ENCODE measurements at regions of chr2 and their contacts with region 1.

Region 1: DNA sequence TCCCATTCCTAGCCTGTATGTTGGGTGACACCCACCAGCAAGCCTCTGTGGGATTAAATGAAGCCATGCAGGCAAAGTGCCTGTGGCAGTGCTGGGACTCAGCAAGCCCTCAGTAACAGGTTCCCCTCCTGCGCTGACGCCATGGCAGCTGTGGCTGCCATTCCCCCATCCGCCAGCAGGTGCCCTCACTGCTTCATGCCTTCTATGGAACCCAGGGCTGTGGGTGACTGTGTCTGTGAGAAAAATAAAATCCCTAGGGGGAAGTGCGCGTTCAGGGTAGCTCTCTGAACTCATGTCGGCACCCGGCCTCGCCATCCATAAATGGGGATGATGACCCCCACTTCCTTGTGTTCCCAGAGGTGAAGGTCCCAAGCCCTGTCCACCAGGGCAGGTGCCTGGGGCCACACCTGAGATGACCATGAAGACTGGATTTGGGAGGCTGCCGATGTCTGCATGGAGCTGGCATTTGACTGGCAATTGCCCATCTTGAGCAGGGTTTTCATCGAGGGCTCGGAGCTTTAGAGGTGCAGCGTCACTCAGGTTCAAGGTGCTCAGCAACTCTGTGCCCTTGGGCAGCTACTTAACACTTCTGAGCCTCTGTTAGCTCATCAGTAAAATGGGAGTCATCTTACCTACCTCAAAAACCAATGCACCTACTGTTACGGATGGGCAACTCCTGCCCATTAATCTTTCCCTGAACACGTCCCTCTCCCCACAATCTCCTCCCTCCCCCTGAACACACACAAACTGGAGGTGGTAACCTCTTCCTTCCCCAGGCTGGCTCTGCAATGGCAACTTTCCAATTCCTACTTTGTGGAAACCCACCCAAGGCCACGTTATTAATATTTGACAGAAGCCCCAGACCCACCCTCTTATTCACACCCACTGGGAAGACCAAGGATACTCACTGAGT is 2.9 kb upstream of the MAL start:
- DNase-seq: peak; percentile 69 to 90 (median 83)
- ATAC-seq: peak; percentile 78
- H3K4me3 ChIP-seq: peak overlapping the region; percentile 39
- H3K4me3 Mint-ChIP-seq: peak overlapping the region; percentile 77 to 100 (median 86)
- H3K27ac ChIP-seq: peak overlapping the region; percentile 49
- H3K27ac Mint-ChIP-seq: peak overlapping the region; percentile 81 to 100 (median 95)
- H3K4me1 ChIP-seq: peaks cover 9 to 26% of the 10 kb centered on the region in 2 donors
- H3K4me1 Mint-ChIP-seq: peaks cover 23 to 66% (median 60%) of the 10 kb centered on the region in 7 donors
- H3K27me3 ChIP-seq: no peaks in the 10 kb centered on the region
- H3K27me3 Mint-ChIP-seq: peaks cover 0 to 14% (median 0%) of the 10 kb centered on the region in 5 donors

Region 2: DNA sequence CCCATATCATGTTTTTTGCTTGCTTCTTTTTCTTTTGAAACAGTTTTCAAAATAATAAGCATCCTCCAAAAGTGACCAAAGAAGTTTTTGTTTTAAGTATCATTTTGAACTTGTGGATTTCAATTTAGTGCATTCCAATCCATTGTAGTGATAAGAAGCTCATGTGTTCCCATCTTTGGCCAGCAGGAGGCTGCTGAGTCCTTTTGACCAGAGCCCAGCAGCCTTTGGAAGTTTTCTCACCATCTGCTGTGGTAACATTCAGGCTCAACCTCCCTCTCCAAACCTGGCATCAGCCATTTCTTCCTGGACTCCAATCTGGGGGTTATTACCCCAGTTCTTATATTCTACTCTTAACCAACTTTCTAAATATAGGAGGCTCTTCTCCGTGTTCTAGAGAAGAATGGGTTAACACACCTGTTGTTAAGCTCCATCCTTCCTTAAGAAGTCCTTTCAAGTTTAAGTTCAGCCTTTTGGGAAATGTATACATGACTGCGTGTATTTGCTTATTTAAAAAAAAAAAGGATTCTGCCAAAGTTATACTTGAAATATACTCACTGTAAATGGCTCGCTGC is 36.1 kb before region 1 on chr2:
- CTCF ChIA-PET with region 1: interaction called, 3 read pairs
- POLR2A ChIA-PET with region 1: no interaction called
- intact Hi-C with region 1: loop called in 1 of 2 experiments (anchors 1 kb)
- DNase-seq: peak in 6 of 9 donors; percentile 20 to 50 (median 28)
- ATAC-seq: no peak
- H3K4me3 ChIP-seq: no peak overlapping the region
- H3K4me3 Mint-ChIP-seq: no peak overlapping the region
- H3K27ac ChIP-seq: no peak overlapping the region
- H3K27ac Mint-ChIP-seq: no peak overlapping the region
- H3K4me1 ChIP-seq: no peaks in the 10 kb centered on the region
- H3K4me1 Mint-ChIP-seq: peaks cover 0 to 6% (median 0%) of the 10 kb centered on the region in 7 donors
- H3K27me3 ChIP-seq: no peaks in the 10 kb centered on the region
- H3K27me3 Mint-ChIP-seq: peaks cover 11 to 26% (median 20%) of the 10 kb centered on the region in 5 donors

Region 3: DNA sequence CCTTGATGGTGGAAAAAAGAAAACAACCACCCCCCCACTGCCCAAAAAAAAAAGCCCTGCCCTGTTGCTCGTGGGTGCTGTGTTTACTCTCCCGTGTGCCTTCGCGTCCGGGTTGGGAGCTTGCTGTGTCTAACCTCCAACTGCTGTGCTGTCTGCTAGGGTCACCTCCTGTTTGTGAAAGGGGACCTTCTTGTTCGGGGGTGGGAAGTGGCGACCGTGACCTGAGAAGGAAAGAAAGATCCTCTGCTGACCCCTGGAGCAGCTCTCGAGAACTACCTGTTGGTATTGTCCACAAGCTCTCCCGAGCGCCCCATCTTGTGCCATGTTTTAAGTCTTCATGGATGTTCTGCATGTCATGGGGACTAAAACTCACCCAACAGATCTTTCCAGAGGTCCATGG is 31.0 kb after region 1 on chr2:
- CTCF ChIA-PET with region 1: interaction called, 65 read pairs
- POLR2A ChIA-PET with region 1: interaction called, 380 read pairs
- intact Hi-C with region 1: loop called (anchors 1 to 2 kb)
- DNase-seq: peak in 1 of 9 donors; percentile 42
- ATAC-seq: no peak
- H3K4me3 ChIP-seq: no peak overlapping the region
- H3K4me3 Mint-ChIP-seq: peak overlapping the region; percentile 2 to 78 (median 49)
- H3K27ac ChIP-seq: peak overlapping the region; percentile 62
- H3K27ac Mint-ChIP-seq: peak overlapping the region; percentile 76 to 98 (median 90)
- H3K4me1 ChIP-seq: peaks cover 0 to 70% of the 10 kb centered on the region in 2 donors
- H3K4me1 Mint-ChIP-seq: peaks cover 29 to 94% (median 87%) of the 10 kb centered on the region in 7 donors
- H3K27me3 ChIP-seq: no peaks in the 10 kb centered on the region
- H3K27me3 Mint-ChIP-seq: no peaks in the 10 kb centered on the region

Region 4: GRCh38 chr2:95076784-95077529 is 54.4 kb after region 1 on chr2:
- CTCF ChIA-PET with region 1: interaction called, 502 read pairs
- POLR2A ChIA-PET with region 1: interaction called, 1,031 read pairs
- intact Hi-C with region 1: loop called (anchors 1 kb)
- DNase-seq: peak; percentile 77 to 92 (median 89)
- ATAC-seq: peak; percentile 87
- H3K4me3 ChIP-seq: peak overlapping the region; percentile 90
- H3K4me3 Mint-ChIP-seq: peak overlapping the region; percentile 85 to 97 (median 93)
- H3K27ac ChIP-seq: peak overlapping the region; percentile 80
- H3K27ac Mint-ChIP-seq: peak overlapping the region; percentile 96 to 99 (median 98)
- H3K4me1 ChIP-seq: peaks cover 22 to 73% of the 10 kb centered on the region in 2 donors
- H3K4me1 Mint-ChIP-seq: peaks cover 28 to 83% (median 77%) of the 10 kb centered on the region in 7 donors
- H3K27me3 ChIP-seq: no peaks in the 10 kb centered on the region
- H3K27me3 Mint-ChIP-seq: no peaks in the 10 kb centered on the region

Region 5: GRCh38 chr2:95165129-95166064 is 142.8 kb after region 1 on chr2 and contains the start of gene ZNF2:
- CTCF ChIA-PET with region 1: interaction called, 12 read pairs
- POLR2A ChIA-PET with region 1: interaction called, 27 read pairs
- intact Hi-C with region 1: loop called (anchors 1 kb)
- DNase-seq: peak; percentile 92 to 98 (median 96)
- ATAC-seq: peak; percentile 97
- H3K4me3 ChIP-seq: peak within 1 kb of the TSS; percentile 91
- H3K4me3 Mint-ChIP-seq: peak within 1 kb of the TSS; percentile 97 to 100 (median 99)
- H3K27ac ChIP-seq: peak within 1 kb of the TSS; percentile 82
- H3K27ac Mint-ChIP-seq: peak within 1 kb of the TSS; percentile 91 to 99 (median 96)
- H3K4me1 ChIP-seq: peaks cover 4 to 13% of the 10 kb centered on the region in 2 donors
- H3K4me1 Mint-ChIP-seq: peaks cover 23 to 54% (median 42%) of the 10 kb centered on the region in 7 donors
- H3K27me3 ChIP-seq: no peaks in the 10 kb centered on the region
- H3K27me3 Mint-ChIP-seq: no peaks in the 10 kb centered on the region
- total RNA-seq, gene ZNF2: 1.5 to 10.2 (median 3.4) TPM

Region 6: GRCh38 chr2:95402370-95403203 is 380.0 kb after region 1 on chr2 and contains the start of gene FAHD2A:
- CTCF ChIA-PET with region 1: no interaction called
- POLR2A ChIA-PET with region 1: no interaction called
- intact Hi-C with region 1: loop called (anchors 1 to 2 kb)
- DNase-seq: peak; percentile 82 to 95 (median 91)
- ATAC-seq: peak; percentile 95
- H3K4me3 ChIP-seq: peak within 1 kb of the TSS; percentile 94
- H3K4me3 Mint-ChIP-seq: peak within 1 kb of the TSS; percentile 91 to 99 (median 97)
- H3K27ac ChIP-seq: peak within 1 kb of the TSS; percentile 87
- H3K27ac Mint-ChIP-seq: peak within 1 kb of the TSS; percentile 86 to 98 (median 94)
- H3K4me1 ChIP-seq: peaks cover 0 to 5% of the 10 kb centered on the region in 2 donors
- H3K4me1 Mint-ChIP-seq: peaks cover 14 to 26% (median 23%) of the 10 kb centered on the region in 7 donors
- H3K27me3 ChIP-seq: no peaks in the 10 kb centered on the region
- H3K27me3 Mint-ChIP-seq: no peaks in the 10 kb centered on the region
- total RNA-seq, gene FAHD2A: 22.6 to 41.4 (median 33.7) TPM

Region 7: DNA sequence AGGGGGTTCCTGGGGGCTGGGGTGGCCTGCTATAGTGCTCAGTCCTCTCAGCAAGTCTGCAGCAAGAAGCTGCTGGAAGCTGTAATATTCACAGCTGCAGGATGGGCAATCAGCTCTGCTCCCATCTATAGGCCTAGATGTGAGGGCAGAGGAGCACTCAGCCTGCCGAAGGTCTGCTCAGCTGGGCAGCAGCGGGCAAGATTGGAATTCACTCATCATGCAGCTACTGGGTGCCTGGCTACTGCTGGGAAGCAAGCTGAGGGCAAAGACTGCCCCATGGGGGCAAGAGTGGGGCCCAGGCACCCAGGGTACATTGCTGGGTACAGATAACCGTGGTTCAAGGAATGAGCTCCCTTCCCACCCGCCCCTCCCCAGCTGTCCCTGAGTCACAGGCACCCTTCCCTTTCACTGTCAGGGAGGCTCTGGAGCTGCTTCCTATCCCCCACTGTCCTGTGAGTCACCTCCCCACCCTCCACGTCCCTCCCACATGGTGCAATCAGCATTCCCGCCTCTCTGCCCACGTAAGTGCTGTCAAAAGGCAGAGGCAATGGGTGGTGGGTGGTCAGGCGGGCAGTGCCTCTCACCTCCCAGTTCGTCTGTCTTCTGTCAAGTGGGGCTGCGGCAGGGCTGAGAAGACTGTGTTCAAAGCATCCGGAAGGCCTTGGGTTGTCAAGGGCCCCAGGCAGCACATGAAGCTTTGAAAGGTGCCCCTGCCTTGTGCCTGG is 738.4 kb after region 1 on chr2:
- CTCF ChIA-PET with region 1: no interaction called
- POLR2A ChIA-PET with region 1: no interaction called
- intact Hi-C with region 1: no loop called
- DNase-seq: no peak
- ATAC-seq: no peak
- H3K4me3 ChIP-seq: no peak overlapping the region
- H3K4me3 Mint-ChIP-seq: no peak overlapping the region
- H3K27ac ChIP-seq: no peak overlapping the region
- H3K27ac Mint-ChIP-seq: no peak overlapping the region
- H3K4me1 ChIP-seq: no peaks in the 10 kb centered on the region
- H3K4me1 Mint-ChIP-seq: no peaks in the 10 kb centered on the region
- H3K27me3 ChIP-seq: no peaks in the 10 kb centered on the region
- H3K27me3 Mint-ChIP-seq: no peaks in the 10 kb centered on the region

Measured in naive thymus-derived CD4-positive, alpha-beta T cell (primary cell).